ENCODE measurements at regions of chr12 and their contacts with region 1.

Region 1: GRCh38 chr12:49130151-49131050 is 794 bp downstream of the TUBA1B start:
- DNase-seq: peak; percentile 92
- H3K4me3 Mint-ChIP-seq: peak overlapping the region; percentile 98
- H3K27ac Mint-ChIP-seq: peak overlapping the region; percentile 93
- H3K4me1 Mint-ChIP-seq: peaks cover 59% of the 10 kb centered on the region
- H3K27me3 Mint-ChIP-seq: no peaks in the 10 kb centered on the region

Region 2: DNA sequence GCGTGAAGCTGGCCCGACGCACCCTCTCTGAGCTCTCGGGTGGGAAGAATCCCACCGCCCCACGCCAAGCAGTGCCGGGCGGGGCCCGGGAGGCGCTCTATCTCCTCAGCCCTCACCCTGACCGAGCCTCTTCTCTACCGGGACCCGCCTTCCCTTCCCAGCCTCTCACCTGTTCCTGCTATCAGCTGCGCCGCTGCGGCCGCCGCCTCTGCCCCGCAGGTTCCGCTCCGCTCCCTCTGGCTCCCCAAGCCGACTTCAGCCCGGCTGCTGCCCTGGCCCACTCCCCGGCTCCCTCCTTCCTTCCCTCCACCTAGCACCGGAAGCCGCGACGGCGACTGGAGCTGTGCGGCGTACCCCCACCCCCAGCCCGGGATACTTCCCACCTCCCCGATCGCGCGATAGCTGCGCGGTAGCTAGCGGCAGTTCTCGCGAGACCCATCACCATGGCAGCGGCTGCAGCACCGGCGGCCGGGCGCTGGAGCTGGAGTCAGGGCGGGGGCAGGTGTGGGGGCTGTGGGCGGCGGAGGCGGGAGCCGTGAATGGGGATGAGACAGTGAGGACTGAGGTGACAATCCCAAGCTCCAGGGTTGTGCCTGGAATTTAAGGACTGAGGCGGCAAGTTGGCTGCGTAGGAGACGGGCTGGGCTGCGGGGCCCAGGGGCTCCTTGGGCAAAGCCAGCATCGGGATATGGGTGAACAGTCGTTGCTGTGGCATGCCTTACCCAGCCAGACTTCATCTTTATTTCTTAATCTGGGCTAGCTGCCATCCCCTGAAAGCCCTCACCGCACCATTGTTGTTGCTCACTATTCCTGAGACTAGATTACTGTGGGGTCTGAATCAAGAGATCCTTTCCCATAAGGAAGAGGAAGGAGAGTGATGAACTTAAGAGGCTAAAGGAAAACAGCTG is 173.0 kb before region 1 on chr12 and contains the start of gene ARF3:
- intact Hi-C with region 1: loop called (anchors 1 kb)
- DNase-seq: peak; percentile 91
- H3K4me3 Mint-ChIP-seq: peak within 1 kb of the TSS; percentile 94
- H3K27ac Mint-ChIP-seq: peak within 1 kb of the TSS; percentile 94
- H3K4me1 Mint-ChIP-seq: peaks cover 46% of the 10 kb centered on the region
- H3K27me3 Mint-ChIP-seq: peaks cover 33% of the 10 kb centered on the region
- total RNA-seq, gene ARF3: 116 and 117 TPM in 2 replicates

Region 3: GRCh38 chr12:49060237-49061156 is 69.9 kb before region 1 on chr12 and contains the start of gene KMT2D:
- intact Hi-C with region 1: loop called (anchors 1 kb)
- DNase-seq: peak; percentile 83
- H3K4me3 Mint-ChIP-seq: peak within 1 kb of the TSS; percentile 95
- H3K27ac Mint-ChIP-seq: peak within 1 kb of the TSS; percentile 95
- H3K4me1 Mint-ChIP-seq: peaks cover 48% of the 10 kb centered on the region
- H3K27me3 Mint-ChIP-seq: no peaks in the 10 kb centered on the region
- total RNA-seq, gene KMT2D: 107 and 109 TPM in 2 replicates

Region 4: GRCh38 chr12:49088190-49088931 is 42.0 kb before region 1 on chr12:
- intact Hi-C with region 1: loop called (anchors 1 kb)
- DNase-seq: peak; percentile 67
- H3K4me3 Mint-ChIP-seq: peak overlapping the region; percentile 42
- H3K27ac Mint-ChIP-seq: no peak overlapping the region
- H3K4me1 Mint-ChIP-seq: peaks cover 57% of the 10 kb centered on the region
- H3K27me3 Mint-ChIP-seq: peaks cover 38% of the 10 kb centered on the region

Region 5: DNA sequence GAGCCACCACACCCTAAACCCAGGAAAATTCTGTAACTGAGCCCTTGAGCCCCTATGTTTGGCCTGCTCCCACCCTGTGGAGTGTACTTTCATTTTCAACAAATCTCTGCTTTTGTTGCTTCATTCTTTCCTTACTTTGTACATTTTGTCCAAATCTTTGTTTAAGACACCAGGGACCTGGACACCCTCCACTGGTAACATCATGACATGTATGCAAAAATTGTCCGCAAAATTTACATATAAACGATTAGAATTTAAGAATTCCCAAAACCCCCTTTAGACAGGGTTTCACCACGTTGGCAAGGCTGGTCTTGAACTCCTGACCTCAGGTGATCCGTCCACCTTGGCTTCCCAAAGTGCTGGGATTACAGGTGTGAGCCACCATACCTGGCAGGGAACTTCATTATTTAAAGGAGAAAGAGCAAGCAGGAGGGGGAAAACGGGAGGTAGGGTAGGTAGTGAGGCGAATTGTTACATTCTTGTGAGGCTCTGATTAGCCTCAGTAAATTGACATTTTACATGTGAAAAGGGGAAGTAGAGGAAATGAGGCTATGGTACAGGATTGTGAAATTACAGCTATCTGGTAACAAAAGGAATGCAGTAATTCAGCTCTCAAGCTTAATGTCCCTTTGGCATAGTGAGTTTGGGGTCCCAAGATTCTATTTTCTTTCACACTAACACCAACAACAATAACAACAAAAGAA is 30.8 kb after region 1 on chr12:
- intact Hi-C with region 1: no loop called
- DNase-seq: no peak
- H3K4me3 Mint-ChIP-seq: no peak overlapping the region
- H3K27ac Mint-ChIP-seq: no peak overlapping the region
- H3K4me1 Mint-ChIP-seq: no peaks in the 10 kb centered on the region
- H3K27me3 Mint-ChIP-seq: no peaks in the 10 kb centered on the region

Region 6: DNA sequence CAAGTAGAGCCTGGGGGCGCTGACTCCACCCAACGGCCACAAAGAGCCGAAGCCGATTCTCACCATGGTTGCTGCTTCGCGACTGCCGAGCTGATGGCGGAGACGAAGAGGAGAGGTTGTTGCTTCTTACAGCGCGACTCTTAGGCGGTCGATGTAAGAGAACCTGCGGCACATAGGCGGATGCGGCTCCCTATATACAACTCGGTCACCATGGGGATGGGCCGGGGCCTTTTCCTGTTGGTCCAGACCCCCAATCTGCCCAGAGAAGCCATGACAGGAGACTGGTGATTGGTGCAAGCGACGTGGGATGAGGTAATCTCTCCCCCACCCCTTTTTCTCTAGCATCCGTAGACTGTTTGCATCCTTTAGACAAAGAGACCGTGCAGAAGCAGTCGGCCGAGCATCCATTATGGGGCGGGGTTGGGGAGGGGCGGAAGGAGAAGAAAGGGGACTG is 58.5 kb after region 1 on chr12 and contains the start of gene TUBA1A:
- intact Hi-C with region 1: loop called (anchors 1 kb)
- DNase-seq: peak; percentile 94
- H3K4me3 Mint-ChIP-seq: peak within 1 kb of the TSS; percentile 90
- H3K27ac Mint-ChIP-seq: peak within 1 kb of the TSS; percentile 95
- H3K4me1 Mint-ChIP-seq: peaks cover 15% of the 10 kb centered on the region
- H3K27me3 Mint-ChIP-seq: peaks cover 2% of the 10 kb centered on the region
- total RNA-seq, gene TUBA1A: 46.7 and 47.2 TPM in 2 replicates

Region 7: GRCh38 chr12:49264738-49265515 is 134.5 kb after region 1 on chr12 and contains the start of gene TUBA1C:
- intact Hi-C with region 1: loop called (anchors 1 kb)
- DNase-seq: peak; percentile 92
- H3K4me3 Mint-ChIP-seq: peak within 1 kb of the TSS; percentile 99
- H3K27ac Mint-ChIP-seq: peak within 1 kb of the TSS; percentile 100
- H3K4me1 Mint-ChIP-seq: peaks cover 38% of the 10 kb centered on the region
- H3K27me3 Mint-ChIP-seq: no peaks in the 10 kb centered on the region
- total RNA-seq, gene TUBA1C: 261 and 270 TPM in 2 replicates

Region 8: DNA sequence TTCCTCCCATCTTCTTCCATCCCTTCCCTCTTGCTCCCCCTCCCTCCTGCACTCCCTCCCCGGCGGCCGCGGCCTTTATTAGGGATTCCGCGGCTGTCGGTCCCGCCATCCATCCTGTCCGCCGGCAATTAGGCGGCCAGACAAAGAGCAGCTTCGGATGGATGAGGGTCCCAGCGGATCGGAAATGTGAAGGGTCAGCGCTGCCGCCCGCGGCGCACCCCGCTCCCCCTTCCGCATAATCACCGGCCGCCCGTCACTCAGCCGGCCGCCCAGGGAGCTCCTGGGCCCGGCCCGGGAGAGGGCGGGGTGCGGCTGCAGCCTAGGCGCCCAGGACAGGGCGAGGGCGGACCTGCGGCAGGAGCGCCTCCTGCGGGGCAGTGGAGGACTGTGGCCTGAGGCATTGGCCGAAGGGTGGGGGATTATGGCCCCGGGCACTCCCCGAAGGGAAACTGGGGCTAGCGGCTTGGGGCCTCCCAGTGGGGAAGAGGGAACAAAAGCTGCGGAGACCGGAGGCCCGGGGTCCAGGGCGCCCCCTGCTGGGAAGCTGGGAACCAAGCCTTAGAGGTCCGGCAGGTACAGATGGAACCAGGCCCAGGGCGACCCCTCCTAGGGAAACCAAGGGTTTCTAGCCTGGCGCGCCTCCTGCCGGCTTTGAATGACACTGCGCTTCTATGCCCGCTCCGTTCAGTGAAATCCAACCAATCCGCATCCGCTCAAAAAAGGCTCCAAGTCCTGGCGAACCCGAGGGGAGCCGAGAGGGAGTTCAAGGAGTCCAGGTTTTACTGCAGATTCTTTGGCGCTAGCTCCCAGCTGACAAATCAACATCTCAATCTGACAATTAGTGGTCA is 211.9 kb after region 1 on chr12:
- intact Hi-C with region 1: loop called (anchors 5 kb)
- DNase-seq: peak; percentile 56
- H3K4me3 Mint-ChIP-seq: peak overlapping the region; percentile 37
- H3K27ac Mint-ChIP-seq: no peak overlapping the region
- H3K4me1 Mint-ChIP-seq: peaks cover 35% of the 10 kb centered on the region
- H3K27me3 Mint-ChIP-seq: peaks cover 77% of the 10 kb centered on the region

Measured in activated T-helper 1 cell treated with anti-CD3 and anti-CD28 coated beads, Interleukin-12 subunit alpha, Interleukin-12 subunit beta, Interleukin-2, Interleukin-4 antibody, amounts not matched to agents 30 ng/mL and 10 ng/mL and 1 ng/mL, durations not matched to agents 14 hours and 24 hours and 36 hours (primary cell).